ENCODE measurements at regions of chr1 and their contacts with region 1.

Region 1: GRCh38 chr1:15788624-15789301 is 18.7 kb downstream of the UQCRHL start:
- DNase-seq: no peak
- H3K4me3 Mint-ChIP-seq: no peak overlapping the region
- H3K27ac Mint-ChIP-seq: no peak overlapping the region
- H3K4me1 Mint-ChIP-seq: no peaks in the 10 kb centered on the region
- H3K27me3 Mint-ChIP-seq: peaks cover 4% of the 10 kb centered on the region

Region 2: DNA sequence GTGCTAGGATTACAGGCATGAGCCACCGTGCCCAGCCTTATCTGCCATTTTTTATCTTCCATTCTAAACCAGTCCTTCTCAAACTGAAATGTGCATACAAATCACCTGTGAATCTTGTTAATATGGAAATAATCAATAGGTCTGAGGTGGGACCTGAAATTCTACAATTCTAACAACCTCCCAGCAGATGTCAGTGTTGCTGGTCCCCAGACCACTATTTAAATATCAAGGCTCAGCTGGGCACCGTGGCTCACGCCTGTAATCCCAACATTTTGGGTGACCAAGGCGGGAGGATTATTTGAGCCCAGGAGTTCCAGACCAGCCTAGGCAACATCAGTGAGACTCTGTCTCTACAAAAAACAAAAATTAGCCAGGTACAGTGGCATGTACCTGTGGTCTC is 14.6 kb after region 1 on chr1:
- CTCF ChIA-PET with region 1: interaction called, 15 read pairs
- POLR2A ChIA-PET with region 1: no interaction called
- intact Hi-C with region 1: no loop called
- DNase-seq: peak; percentile 32
- H3K4me3 Mint-ChIP-seq: no peak overlapping the region
- H3K27ac Mint-ChIP-seq: no peak overlapping the region
- H3K4me1 Mint-ChIP-seq: no peaks in the 10 kb centered on the region
- H3K27me3 Mint-ChIP-seq: no peaks in the 10 kb centered on the region

Region 3: DNA sequence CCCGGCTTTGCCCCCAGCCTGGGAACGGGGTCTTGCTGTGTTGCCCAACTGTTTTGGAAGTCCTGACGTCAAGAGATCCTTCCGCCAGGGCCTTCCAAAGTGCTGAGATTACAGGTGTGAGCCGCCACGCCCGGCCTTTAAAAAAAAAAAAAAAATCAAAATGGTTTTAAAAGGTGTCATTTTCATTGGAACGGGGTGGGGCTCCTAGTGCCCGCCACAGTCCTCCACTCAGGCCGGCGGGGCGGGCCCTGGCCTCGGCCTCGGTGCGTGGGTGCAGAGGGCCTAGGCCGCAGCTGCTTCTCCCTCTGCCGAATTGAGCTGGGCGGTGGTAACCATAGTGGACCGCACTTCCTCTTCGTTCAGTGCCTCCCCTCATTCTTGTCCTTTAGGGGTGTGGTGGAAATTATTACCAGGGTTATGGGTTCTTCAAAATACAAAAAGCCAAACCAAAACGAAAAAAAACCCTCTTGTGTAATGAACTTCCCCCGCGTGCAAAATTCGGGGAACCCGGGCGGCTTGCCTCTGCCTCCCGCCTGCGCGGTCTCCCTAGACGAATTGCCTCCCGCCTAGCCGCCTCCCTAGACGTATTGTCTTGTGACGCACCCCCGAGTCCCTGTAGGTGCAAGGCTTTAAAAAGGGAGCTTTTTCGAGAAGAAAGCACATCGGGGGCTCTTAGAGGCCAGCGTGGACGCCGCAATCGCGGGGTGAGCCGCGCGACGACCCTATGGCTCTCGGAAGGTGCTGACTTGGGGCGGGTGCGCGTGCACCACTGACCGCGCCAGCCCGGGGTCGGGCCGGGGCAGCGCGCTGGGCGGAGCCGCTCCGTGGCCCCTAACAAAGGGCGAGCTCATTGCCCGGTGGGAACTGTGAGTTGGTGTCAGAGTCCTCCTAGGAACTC is 48.3 kb after region 1 on chr1:
- CTCF ChIA-PET with region 1: no interaction called
- POLR2A ChIA-PET with region 1: no interaction called
- intact Hi-C with region 1: no loop called
- DNase-seq: peak; percentile 82
- H3K4me3 Mint-ChIP-seq: peak overlapping the region; percentile 81
- H3K27ac Mint-ChIP-seq: peak overlapping the region; percentile 96
- H3K4me1 Mint-ChIP-seq: peaks cover 13% of the 10 kb centered on the region
- H3K27me3 Mint-ChIP-seq: no peaks in the 10 kb centered on the region

Region 4: GRCh38 chr1:15876357-15877055 is 87.7 kb after region 1 on chr1:
- CTCF ChIA-PET with region 1: no interaction called
- POLR2A ChIA-PET with region 1: no interaction called
- intact Hi-C with region 1: no loop called
- DNase-seq: no peak
- H3K4me3 Mint-ChIP-seq: no peak overlapping the region
- H3K27ac Mint-ChIP-seq: no peak overlapping the region
- H3K4me1 Mint-ChIP-seq: peaks cover 45% of the 10 kb centered on the region
- H3K27me3 Mint-ChIP-seq: no peaks in the 10 kb centered on the region

Region 5: DNA sequence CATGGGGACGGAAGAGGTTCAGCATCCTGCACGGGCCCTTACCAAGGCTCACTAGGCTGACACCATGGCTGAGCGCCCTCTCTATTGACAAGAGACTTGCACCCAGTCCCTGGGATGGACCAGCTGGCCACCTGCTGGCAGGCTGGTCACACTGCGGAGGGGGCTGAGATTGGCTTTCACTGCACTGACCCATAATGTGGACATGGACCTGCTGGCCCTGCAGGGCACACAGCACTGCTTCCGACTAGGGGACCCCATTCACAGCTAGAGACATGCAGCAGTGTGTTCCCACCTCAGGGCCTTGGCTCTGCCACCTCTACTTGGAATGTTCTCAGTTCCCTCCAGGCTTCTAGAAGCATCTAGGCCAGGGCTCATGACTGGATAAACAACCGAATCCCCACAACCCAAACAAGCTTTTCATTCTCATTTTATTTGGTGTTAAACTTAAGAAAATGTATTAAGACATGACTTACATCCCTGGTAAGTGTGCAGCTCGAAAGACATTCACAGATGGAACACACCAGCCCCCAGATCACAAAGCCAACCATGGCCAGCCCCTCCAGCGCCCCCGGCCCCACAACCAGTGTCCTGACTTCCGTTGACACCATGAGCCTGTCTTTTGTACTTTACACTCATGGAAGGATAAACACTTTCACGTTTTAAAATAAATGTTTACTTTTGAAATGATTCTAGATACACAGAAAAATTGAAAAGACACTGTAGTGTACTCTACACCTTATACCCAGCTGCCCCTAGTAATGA is 206.0 kb after region 1 on chr1:
- CTCF ChIA-PET with region 1: interaction called, 11 read pairs
- POLR2A ChIA-PET with region 1: no interaction called
- intact Hi-C with region 1: loop called (anchors 1 kb)
- DNase-seq: peak; percentile 72
- H3K4me3 Mint-ChIP-seq: no peak overlapping the region
- H3K27ac Mint-ChIP-seq: no peak overlapping the region
- H3K4me1 Mint-ChIP-seq: no peaks in the 10 kb centered on the region
- H3K27me3 Mint-ChIP-seq: no peaks in the 10 kb centered on the region

Region 6: DNA sequence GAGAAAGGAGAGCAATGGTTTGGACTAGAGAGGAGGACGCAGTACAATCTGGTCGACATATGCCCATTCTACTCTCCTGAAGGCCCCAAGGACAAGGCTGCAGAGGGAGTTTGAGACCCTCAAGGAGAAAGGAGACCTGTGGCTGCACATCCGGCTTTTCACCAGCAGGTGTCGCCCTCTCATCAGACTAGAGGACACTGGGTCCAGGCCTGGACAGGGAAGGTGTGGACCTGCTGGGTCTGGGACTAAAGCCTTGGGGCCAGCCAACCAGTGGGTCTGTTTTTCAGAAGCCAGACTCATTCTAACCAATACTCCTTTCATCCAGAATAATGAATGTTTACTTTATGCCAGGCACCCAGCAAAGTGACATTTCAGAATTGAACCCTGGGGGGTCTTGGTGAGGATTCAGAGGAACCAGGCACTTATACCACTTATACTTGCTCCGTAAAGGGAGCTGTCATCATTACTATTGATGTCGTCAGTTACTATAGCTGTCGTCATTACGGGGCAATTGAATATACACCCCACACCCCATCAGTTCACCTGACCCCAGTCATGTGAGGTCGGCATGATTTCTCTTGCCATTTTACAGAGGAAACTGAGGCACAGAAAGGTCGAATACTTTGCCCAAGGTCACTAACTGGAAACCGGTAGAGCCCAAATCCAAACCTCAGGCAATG is 220.4 kb after region 1 on chr1:
- CTCF ChIA-PET with region 1: interaction called, 26 read pairs
- POLR2A ChIA-PET with region 1: no interaction called
- intact Hi-C with region 1: loop called (anchors 5 kb)
- DNase-seq: peak; percentile 79
- H3K4me3 Mint-ChIP-seq: no peak overlapping the region
- H3K27ac Mint-ChIP-seq: no peak overlapping the region
- H3K4me1 Mint-ChIP-seq: peaks cover 5% of the 10 kb centered on the region
- H3K27me3 Mint-ChIP-seq: peaks cover 6% of the 10 kb centered on the region

Region 7: DNA sequence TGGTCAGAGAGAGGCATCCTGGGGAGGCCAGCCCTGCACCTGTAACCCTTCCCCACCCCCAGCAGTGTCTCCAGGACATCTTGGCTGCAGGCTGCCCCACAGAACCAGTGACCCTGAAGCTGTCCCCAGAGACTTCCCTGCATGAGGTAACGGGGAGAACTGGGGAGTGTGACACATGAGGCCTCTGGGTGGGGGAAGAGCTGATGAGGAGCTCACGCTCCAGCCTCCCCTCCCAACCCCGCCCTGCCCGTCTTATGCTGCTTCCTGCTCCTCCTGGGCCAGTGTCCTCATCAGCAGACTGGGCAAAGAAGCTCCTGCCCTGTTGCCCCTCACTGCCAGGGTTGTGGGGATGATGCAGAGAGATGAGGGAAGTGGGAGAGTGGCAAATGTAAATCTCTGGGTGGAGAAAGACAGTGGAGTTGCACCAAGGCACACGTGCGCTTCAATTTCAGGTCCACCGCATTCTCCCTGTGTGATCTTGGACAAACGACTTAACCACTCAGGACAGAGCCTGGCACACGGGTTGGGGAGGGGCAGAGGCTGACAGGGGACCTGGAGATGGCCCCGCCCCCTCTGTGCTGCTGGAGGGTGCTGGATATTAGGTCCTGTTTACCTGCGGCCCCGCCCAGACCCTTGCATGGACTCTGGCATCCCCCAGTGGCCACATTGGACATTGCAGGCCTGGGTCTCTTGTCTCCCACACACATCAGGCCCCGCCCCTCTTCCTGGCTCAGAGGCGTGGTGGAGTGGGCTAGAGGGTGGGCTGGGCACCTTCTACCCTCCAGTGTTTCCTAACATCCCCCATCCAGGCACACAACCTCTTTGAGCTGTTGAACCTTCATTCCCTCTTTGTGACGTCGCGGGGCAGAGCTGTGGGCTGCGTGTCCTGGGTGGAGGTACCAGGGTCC is 267.1 kb after region 1 on chr1:
- CTCF ChIA-PET with region 1: interaction called, 25 read pairs
- POLR2A ChIA-PET with region 1: no interaction called
- intact Hi-C with region 1: loop called (anchors 5 kb)
- DNase-seq: peak; percentile 91
- H3K4me3 Mint-ChIP-seq: no peak overlapping the region
- H3K27ac Mint-ChIP-seq: no peak overlapping the region
- H3K4me1 Mint-ChIP-seq: peaks cover 6% of the 10 kb centered on the region
- H3K27me3 Mint-ChIP-seq: peaks cover 1% of the 10 kb centered on the region